A673 (cell line): ENCODE measurements at regions of chr2 and their contacts with region 1.

Region 1: GRCh38 chr2:144268036-144268678 is 251.8 kb downstream of the ZEB2 start:
- DNase-seq: no peak
- H3K4me3 ChIP-seq: no peak overlapping the region
- H3K27ac ChIP-seq: no peak overlapping the region
- H3K4me1 ChIP-seq: peaks cover 15% of the 10 kb centered on the region
- H3K27me3 ChIP-seq: no peaks in the 10 kb centered on the region
- CTCF ChIP-seq: no peak

Region 2: GRCh38 chr2:143451642-143452281 is 816.4 kb before region 1 on chr2:
- CTCF ChIA-PET with region 1: no interaction called
- POLR2A ChIA-PET with region 1: no interaction called
- intact Hi-C with region 1: no loop called
- DNase-seq: peak; percentile 97
- H3K4me3 ChIP-seq: peak overlapping the region; percentile 9
- H3K27ac ChIP-seq: peak overlapping the region; percentile 17
- H3K4me1 ChIP-seq: peaks cover 32% of the 10 kb centered on the region
- H3K27me3 ChIP-seq: no peaks in the 10 kb centered on the region
- CTCF ChIP-seq: no peak

Region 3: GRCh38 chr2:144288438-144288837 is 20.3 kb after region 1 on chr2:
- CTCF ChIA-PET with region 1: no interaction called
- POLR2A ChIA-PET with region 1: no interaction called
- intact Hi-C with region 1: loop called (anchors 2 kb)
- DNase-seq: no peak
- H3K4me3 ChIP-seq: no peak overlapping the region
- H3K27ac ChIP-seq: no peak overlapping the region
- H3K4me1 ChIP-seq: no peaks in the 10 kb centered on the region
- H3K27me3 ChIP-seq: no peaks in the 10 kb centered on the region
- CTCF ChIP-seq: no peak